Activated T-helper 1 cell treated with anti-CD3 and anti-CD28 coated beads, Interleukin-12 subunit alpha, Interleukin-12 subunit beta, Interleukin-2, Interleukin-4 antibody, amounts not matched to agents 30 ng/mL and 10 ng/mL and 1 ng/mL, durations not matched to agents 14 hours and 24 hours and 36 hours (primary cell): ENCODE measurements at regions of chr6 and their contacts with region 1.

Region 1: GRCh38 chr6:11414176-11414963 is 123.2 kb upstream of the TMEM170B start:
- DNase-seq: no peak
- H3K4me3 Mint-ChIP-seq: peak overlapping the region; percentile 7
- H3K27ac Mint-ChIP-seq: peak overlapping the region; percentile 49
- H3K4me1 Mint-ChIP-seq: peaks cover 77% of the 10 kb centered on the region
- H3K27me3 Mint-ChIP-seq: no peaks in the 10 kb centered on the region

Region 2: DNA sequence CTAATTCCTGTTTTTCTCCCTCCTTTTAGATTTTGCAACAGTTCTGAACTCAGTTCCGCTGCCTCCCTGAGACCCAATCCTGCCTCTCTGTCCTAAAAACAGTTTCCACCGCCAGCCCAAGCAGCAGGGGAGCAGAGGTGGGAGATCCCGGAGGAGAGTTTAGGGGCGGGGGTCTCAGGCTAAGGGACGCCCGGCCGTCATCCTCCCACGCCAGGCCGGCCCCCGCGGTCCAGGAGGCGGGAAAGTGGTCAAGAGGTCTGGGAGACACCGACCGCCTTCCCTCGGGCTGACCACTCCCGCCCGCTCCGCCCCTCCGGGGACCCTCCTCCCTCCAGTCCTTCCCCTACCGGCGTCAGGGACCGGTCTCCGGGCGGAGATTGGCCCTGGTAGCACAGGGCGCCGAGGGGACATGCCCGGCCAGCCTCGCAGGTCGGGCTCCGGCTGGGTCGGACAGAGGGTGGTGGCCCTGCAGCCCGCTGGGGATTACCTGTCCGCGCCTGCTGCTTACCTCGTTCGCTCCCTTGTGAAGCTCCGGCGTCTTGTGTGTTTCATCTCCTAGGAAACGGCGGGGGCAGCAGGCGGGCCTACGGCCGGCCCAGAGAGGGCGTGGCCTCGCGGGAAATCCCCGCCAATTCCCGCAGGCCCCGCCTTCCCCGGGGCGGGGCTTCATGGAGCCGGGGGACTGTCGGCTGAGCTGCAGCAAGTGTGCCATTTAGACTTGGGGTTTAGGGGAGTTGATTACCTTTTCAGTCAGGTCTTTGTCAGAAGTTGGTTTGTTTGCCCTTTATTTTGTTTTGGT is 576.2 kb before region 1 on chr6 and contains the start of gene MAK:
- intact Hi-C with region 1: loop called (anchors 1 kb)
- DNase-seq: peak; percentile 88
- H3K4me3 Mint-ChIP-seq: peak within 1 kb of the TSS; percentile 85
- H3K27ac Mint-ChIP-seq: peak within 1 kb of the TSS; percentile 99
- H3K4me1 Mint-ChIP-seq: peaks cover 23% of the 10 kb centered on the region
- H3K27me3 Mint-ChIP-seq: peaks cover 32% of the 10 kb centered on the region
- total RNA-seq, gene MAK: 0.67 and 0.73 TPM in 2 replicates

Region 3: GRCh38 chr6:11202513-11203305 is 211.7 kb before region 1 on chr6:
- intact Hi-C with region 1: loop called (anchors 1 kb)
- DNase-seq: peak; percentile 43
- H3K4me3 Mint-ChIP-seq: peak overlapping the region; percentile 54
- H3K27ac Mint-ChIP-seq: peak overlapping the region; percentile 92
- H3K4me1 Mint-ChIP-seq: peaks cover 86% of the 10 kb centered on the region
- H3K27me3 Mint-ChIP-seq: no peaks in the 10 kb centered on the region

Region 4: DNA sequence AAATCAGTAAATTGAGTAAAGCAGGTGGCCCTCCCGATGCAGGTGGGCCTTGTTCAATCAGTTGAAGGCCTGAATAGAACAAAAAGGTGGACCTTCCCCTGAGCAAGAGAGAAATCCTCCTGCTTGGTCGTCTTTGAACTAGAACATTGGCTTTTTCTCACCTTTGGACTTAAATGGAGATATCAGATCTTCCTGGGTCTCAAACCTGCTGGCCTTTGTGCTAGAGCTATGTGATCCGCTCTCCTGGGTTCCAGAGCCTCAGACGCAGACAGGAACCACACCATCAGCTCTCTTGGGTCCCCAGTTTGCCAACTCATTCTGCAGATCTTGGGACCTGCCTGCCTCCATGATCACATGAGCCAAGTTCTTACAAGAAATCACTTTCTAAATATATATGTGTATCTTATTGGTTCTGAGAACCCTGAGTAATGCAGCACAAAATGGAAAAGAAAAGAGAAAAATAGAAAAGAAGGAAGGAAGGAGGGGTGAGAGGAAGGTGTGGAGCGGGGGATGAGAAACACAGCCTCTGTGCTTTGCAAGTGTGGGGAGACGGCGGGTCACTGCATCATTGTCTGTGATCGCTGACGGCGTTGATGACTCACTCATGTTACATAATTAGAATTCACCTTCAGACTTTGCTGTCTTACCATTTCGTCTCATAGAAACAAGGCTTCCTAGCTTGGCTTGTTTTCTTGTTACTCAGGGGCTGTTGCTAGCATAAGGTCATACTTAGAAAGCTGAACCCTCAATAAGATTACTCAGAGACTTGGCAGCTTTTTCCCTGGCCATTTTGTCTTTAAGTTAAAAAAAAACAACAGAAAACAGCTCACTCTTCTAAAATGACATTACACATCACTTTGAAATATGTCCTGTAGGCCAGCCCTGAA is 96.2 kb before region 1 on chr6:
- intact Hi-C with region 1: loop called (anchors 1 kb)
- DNase-seq: peak; percentile 63
- H3K4me3 Mint-ChIP-seq: no peak overlapping the region
- H3K27ac Mint-ChIP-seq: peak overlapping the region; percentile 92
- H3K4me1 Mint-ChIP-seq: peaks cover 64% of the 10 kb centered on the region
- H3K27me3 Mint-ChIP-seq: no peaks in the 10 kb centered on the region

Region 5: DNA sequence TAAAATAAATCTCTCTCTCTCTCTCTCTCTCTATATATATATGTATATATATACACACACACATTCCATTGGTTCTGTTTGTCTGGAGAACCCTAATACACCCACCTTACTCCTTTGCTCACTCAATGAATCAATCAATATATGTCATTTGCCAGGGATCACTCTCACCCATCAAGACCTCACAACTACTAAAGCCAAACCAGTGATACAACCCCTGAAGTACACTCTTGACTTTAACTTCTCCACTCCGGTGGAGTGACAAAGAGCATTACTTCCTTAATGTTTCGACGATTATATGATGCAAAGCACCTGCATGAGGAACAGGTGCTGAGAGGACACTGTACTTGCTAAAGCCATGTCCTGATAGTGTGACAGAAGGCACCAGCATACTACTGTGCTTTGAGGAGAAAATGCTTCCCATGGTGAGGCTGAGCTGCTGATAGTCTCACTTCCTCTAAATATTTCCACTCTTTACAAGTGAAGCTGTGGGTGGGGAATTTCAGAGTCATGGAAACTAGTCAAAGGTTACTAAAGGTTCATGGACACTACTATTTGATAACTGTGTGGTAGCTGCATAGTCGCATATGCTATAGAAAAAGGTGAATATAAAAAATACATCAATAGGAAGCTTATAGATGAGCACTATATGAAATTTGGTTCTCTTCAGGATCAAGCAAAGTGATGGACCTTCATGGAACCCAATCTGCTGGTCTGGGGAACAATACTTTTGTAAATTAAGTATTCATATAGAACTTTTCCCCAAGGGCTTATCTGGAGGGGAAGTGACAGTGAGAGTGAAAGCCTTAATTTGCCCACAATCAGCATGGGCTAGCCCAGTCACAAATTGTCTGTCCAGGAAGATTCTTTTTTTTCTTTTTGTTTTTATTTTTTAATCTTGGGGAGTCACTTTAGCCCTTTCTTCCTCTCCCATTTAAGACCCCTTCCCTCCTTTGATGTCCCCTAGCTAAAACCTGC is 40.0 kb before region 1 on chr6:
- intact Hi-C with region 1: loop called (anchors 2 kb)
- DNase-seq: no peak
- H3K4me3 Mint-ChIP-seq: peak overlapping the region; percentile 65
- H3K27ac Mint-ChIP-seq: peak overlapping the region; percentile 94
- H3K4me1 Mint-ChIP-seq: peaks cover 72% of the 10 kb centered on the region
- H3K27me3 Mint-ChIP-seq: no peaks in the 10 kb centered on the region

Region 6: DNA sequence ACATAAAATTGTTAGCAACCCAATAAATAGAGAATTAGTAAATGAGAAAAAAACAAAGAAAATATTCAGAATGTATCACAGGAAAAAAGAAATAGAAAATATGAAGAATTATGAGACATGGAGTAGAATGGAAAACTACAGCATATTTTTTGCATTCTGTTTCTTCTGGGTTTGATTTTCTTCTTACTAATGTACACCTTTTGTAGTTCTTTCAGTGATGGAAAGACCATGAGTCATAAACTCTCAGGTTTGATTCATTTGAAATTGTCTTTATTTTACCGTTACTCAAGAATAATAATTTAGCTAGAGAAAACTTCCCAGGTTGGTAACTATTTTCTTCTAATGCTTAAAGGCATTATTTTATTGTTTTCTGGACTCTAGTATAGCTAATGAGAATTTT is 32.9 kb after region 1 on chr6:
- intact Hi-C with region 1: loop called (anchors 2 kb)
- DNase-seq: no peak
- H3K4me3 Mint-ChIP-seq: no peak overlapping the region
- H3K27ac Mint-ChIP-seq: no peak overlapping the region
- H3K4me1 Mint-ChIP-seq: peaks cover 32% of the 10 kb centered on the region
- H3K27me3 Mint-ChIP-seq: no peaks in the 10 kb centered on the region

Region 7: DNA sequence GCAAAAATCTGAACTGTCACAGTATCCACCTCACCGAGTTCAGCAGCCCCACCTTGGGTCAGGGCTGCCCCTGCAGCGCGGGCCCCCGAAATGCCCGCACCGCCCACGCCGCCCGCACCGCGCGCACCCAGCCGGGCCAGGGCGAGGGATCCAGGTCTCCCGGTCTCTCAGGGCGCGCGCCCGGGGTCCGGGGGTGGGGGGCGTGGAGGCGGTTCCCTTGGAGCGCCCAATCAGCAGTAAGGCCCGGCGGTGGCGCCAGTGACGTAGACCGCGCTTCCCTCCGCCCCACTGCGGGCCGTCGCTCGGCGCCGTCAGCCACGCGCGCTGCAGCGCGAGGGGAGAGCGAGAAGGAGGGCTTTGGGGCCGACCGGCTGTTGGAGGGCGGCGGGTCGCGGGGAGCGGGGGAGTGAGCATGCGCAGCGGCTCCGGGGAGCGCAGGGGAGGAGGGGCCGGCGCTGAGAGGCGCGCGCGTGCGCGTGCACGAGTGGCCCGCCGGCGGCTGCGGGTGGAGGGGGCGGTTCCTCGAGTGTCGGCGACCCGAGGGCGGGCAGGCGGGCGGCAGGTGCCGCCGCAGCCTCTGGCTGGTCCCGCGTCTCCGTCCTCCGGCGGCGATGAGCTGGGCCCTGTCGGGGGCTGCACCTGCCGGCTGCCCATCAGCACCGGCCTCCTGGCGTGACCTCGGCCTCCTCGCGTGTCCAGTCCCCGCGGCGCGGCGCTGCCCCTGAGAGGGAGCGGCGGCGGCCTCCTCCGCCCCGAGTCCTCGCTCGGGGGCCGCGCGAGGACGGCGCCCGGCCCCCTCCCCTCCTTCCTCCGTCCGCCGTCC is 123.1 kb after region 1 on chr6 and contains the start of gene TMEM170B:
- intact Hi-C with region 1: loop called (anchors 5 kb)
- DNase-seq: peak; percentile 90
- H3K4me3 Mint-ChIP-seq: peak within 1 kb of the TSS; percentile 84
- H3K27ac Mint-ChIP-seq: peak within 1 kb of the TSS; percentile 68
- H3K4me1 Mint-ChIP-seq: peaks cover 17% of the 10 kb centered on the region
- H3K27me3 Mint-ChIP-seq: peaks cover 62% of the 10 kb centered on the region
- total RNA-seq, gene TMEM170B: 0.78 and 0.86 TPM in 2 replicates